PC-3 (cell line): ENCODE measurements at regions of chr6 and their contacts with region 1.

Region 1: GRCh38 chr6:156786652-156787051 is 9.5 kb downstream of the ARID1B start:
- DNase-seq: no peak
- ATAC-seq: no peak
- H3K4me3 ChIP-seq: no peak overlapping the region
- H3K27ac ChIP-seq: no peak overlapping the region
- H3K4me1 ChIP-seq: peaks cover 11% of the 10 kb centered on the region
- H3K27me3 ChIP-seq: no peaks in the 10 kb centered on the region
- CTCF ChIP-seq: no peak

Region 2: DNA sequence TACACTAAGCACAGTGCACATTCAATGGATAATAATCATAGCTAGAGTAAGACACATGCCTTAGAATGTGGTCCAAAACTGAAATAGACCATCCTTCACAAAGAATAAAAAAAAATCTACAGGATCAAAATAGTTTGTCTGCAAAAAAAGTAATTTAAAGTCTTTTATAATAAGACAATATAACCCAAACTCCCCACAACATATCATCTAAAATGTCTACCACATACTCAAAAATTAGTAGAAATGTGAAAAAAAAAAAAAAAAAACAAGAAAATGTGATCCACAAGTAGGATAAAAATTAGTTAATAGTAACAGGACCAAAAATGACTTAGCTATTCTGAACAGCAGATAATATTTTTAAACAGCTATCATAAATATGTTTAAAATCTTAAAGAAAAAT is 566.7 kb before region 1 on chr6:
- CTCF ChIA-PET with region 1: no interaction called
- POLR2A ChIA-PET with region 1: no interaction called
- intact Hi-C with region 1: no loop called
- DNase-seq: no peak
- ATAC-seq: no peak
- H3K4me3 ChIP-seq: no peak overlapping the region
- H3K27ac ChIP-seq: no peak overlapping the region
- H3K4me1 ChIP-seq: no peaks in the 10 kb centered on the region
- H3K27me3 ChIP-seq: no peaks in the 10 kb centered on the region
- CTCF ChIP-seq: no peak

Region 3: DNA sequence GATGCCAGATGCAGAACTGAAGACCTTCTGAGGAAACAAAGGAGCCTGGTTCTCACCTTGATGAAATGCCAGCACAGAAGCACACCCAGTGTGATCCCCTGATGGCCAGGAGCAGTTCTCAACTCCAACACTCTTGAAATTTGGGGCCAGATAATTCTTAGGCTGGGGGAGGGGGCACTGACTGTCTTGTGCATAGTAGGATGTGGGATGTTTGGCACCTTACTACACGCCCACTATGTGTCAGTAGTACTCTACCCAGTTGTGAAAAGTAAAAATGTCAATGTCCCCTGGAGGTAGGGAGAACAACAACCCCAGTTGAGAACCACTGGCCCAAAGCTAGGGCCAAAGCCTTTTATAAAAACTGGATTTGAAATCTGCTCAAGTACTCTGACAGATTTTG is 407.8 kb before region 1 on chr6:
- CTCF ChIA-PET with region 1: no interaction called
- POLR2A ChIA-PET with region 1: no interaction called
- intact Hi-C with region 1: no loop called
- DNase-seq: no peak
- ATAC-seq: no peak
- H3K4me3 ChIP-seq: no peak overlapping the region
- H3K27ac ChIP-seq: no peak overlapping the region
- H3K4me1 ChIP-seq: peaks cover 9% of the 10 kb centered on the region; the same call in 1 of the 2 replicates
- H3K27me3 ChIP-seq: no peaks in the 10 kb centered on the region
- CTCF ChIP-seq: no peak

Region 4: GRCh38 chr6:156686995-156687788 is 99.5 kb before region 1 on chr6:
- CTCF ChIA-PET with region 1: no interaction called
- POLR2A ChIA-PET with region 1: no interaction called
- intact Hi-C with region 1: no loop called
- DNase-seq: peak; percentile 73
- ATAC-seq: peak; percentile 87
- H3K4me3 ChIP-seq: peak overlapping the region; percentile 91
- H3K27ac ChIP-seq: peak overlapping the region; percentile 90
- H3K4me1 ChIP-seq: peaks cover 16% of the 10 kb centered on the region
- H3K27me3 ChIP-seq: no peaks in the 10 kb centered on the region
- CTCF ChIP-seq: no peak

Region 5: DNA sequence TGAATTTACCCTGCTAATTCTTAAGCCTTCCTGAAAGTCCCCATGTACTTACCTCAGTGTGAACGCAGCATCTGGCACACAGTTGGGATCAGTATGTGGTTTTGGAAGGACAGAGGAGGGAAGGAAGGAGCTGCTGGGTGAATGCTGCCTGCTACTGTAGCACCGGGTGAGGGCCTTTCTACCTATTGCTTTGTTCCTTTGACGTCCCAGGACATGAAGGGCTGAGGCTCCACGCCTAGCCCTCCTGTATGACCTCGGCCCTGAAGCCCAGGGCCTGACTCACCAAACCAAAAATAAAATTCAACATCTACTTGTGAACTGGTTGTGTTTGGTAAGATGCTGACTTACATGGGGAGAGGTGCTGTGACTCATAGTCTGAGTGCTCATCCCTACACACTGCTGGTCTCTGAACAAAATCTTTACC is 41.6 kb after region 1 on chr6:
- CTCF ChIA-PET with region 1: no interaction called
- POLR2A ChIA-PET with region 1: interaction called, 10 read pairs
- intact Hi-C with region 1: no loop called
- DNase-seq: peak; percentile 83
- ATAC-seq: peak; percentile 90
- H3K4me3 ChIP-seq: peak overlapping the region; percentile 52; the same call in 1 of the 2 replicates
- H3K27ac ChIP-seq: peak overlapping the region; percentile 99
- H3K4me1 ChIP-seq: peaks cover 24% of the 10 kb centered on the region
- H3K27me3 ChIP-seq: no peaks in the 10 kb centered on the region
- CTCF ChIP-seq: no peak